HepG2 (cell line): ENCODE measurements at regions of chrX and their contacts with region 1.

Region 1: GRCh38 chrX:48021026-48021900 is 14.5 kb downstream of the SPACA5 start:
- DNase-seq: peak; percentile 71
- ATAC-seq: peak; percentile 81
- H3K4me3 ChIP-seq: peak overlapping the region; percentile 71 to 82 (median 79)
- H3K27ac ChIP-seq: peak overlapping the region; percentile 93
- H3K4me1 ChIP-seq: no peaks in the 10 kb centered on the region
- H3K27me3 ChIP-seq: no peaks in the 10 kb centered on the region; a peak in 1 of 5 replicates
- CTCF ChIP-seq: no peak
- EP300 ChIP-seq: no peak
- POLR2A ChIP-seq: 0 out of 4 replicates have a peak, but pooled peaks of 1 of the 2 experiments have one; percentile 23
- RAD21 ChIP-seq: no peak

Region 2: DNA sequence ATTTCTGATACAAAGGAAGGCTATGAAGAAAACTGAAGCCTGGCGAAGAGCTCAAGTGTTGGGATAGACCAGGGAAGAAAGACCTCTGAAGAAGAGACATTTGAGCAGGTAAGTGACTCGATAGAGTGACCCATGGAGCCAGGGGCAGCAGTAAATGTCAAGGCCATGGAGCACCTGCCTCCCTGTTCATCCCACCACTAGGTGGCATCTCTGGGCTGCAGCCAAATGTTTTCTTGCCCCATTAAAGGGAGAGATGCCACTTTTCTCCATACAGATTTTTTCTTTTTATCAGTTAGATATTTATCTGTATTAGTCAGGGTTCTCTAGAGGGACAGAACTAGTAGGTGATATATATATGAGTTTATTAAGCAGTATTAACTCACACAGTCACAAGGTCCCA is 189.5 kb before region 1 on chrX:
- CTCF ChIA-PET with region 1: interaction called, 94 read pairs
- POLR2A ChIA-PET with region 1: interaction called, 3 read pairs
- in situ Hi-C with region 1: loop called (anchors 5 kb)
- intact Hi-C with region 1: no loop called
- DNase-seq: peak; percentile 29
- ATAC-seq: peak; percentile 35; the same call in 2 of the 3 replicates
- H3K4me3 ChIP-seq: no peak overlapping the region
- H3K27ac ChIP-seq: no peak overlapping the region
- H3K4me1 ChIP-seq: peaks cover 6% of the 10 kb centered on the region; the same call in 1 of the 2 replicates
- H3K27me3 ChIP-seq: no peaks in the 10 kb centered on the region
- CTCF ChIP-seq: peak; percentile 72
- EP300 ChIP-seq: no peak
- POLR2A ChIP-seq: no peak
- RAD21 ChIP-seq: peak; percentile 61

Region 3: DNA sequence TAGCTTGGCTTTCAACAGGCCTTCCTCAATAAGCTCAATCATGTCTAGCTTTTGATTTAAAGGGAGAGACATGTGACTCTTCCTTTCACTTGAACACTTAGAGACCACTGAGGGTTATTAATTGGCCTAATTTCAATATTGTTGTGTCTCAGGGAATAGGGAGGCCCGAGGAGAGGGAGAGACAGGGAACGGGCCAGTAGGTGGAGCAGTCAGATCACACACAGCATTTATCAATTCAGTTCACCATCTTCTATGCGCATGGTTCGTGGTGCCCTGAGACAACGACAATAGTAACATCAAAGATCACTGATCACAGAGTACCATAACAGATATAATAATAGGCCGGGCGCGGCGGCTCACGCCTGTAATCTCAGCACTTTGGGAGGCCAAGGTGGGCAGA is 166.8 kb before region 1 on chrX:
- CTCF ChIA-PET with region 1: interaction called, 42 read pairs
- POLR2A ChIA-PET with region 1: no interaction called
- in situ Hi-C with region 1: no loop called
- intact Hi-C with region 1: no loop called
- DNase-seq: no peak
- ATAC-seq: no peak
- H3K4me3 ChIP-seq: no peak overlapping the region
- H3K27ac ChIP-seq: no peak overlapping the region
- H3K4me1 ChIP-seq: 0 out of 2 replicates have a peak, but pooled peaks cover 1% of the 10 kb centered on the region
- H3K27me3 ChIP-seq: no peaks in the 10 kb centered on the region
- CTCF ChIP-seq: peak; percentile 59
- EP300 ChIP-seq: no peak
- POLR2A ChIP-seq: no peak
- RAD21 ChIP-seq: peak; percentile 18; the same call in 1 of the 2 replicates

Region 4: DNA sequence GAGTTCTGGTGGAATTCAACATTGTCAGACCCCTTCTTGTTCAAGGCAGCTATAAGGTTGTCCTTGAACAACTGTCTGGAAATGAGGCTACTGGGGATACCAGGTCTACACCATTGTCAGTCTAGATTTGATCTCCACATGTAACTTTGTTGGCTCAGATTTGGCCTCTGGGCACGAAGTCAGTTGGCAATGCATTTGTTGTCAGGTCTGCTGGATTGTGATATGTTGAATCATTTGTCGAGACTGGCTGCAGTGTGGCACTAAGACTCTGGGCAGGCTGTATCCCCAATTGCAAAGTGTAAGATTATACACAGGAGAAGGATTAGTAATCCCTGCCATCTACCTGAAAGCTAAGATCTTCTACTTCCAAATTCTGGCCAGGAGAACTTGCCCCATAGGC is 158.1 kb before region 1 on chrX:
- CTCF ChIA-PET with region 1: interaction called, 3 read pairs
- POLR2A ChIA-PET with region 1: no interaction called
- in situ Hi-C with region 1: loop called (anchors 5 kb)
- intact Hi-C with region 1: no loop called
- DNase-seq: no peak
- ATAC-seq: no peak
- H3K4me3 ChIP-seq: no peak overlapping the region
- H3K27ac ChIP-seq: no peak overlapping the region
- H3K4me1 ChIP-seq: peaks cover 24% of the 10 kb centered on the region
- H3K27me3 ChIP-seq: no peaks in the 10 kb centered on the region
- CTCF ChIP-seq: no peak
- EP300 ChIP-seq: no peak
- POLR2A ChIP-seq: no peak
- RAD21 ChIP-seq: no peak

Region 5: DNA sequence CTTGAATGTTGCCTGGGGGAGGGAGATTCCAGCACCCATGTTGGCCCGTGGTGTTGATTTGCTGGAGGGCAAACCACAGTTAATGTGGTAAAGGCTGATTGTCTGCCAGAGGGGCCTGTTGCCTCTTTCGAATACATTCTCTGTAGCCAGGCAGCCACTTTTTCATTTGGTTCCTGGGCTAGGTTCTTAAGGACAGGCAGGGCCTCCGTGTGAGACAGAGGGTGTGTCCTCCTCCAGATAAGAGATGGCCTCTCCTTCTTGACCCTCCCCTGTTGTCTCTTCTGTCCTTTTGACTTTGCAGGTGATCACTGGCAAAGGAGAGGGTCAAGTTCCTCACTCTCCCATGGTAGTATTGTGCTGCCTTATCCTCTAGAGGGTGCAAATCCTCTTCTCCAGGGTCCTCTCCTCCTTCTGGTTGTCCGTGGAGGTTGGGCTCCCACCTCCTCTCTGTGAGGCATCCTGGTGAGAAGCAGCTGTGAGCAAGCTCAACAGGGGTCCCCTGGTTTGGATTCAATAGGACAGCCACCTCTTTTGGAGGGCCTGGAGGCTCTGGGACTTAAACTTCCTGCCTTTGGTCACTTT is 62.4 kb before region 1 on chrX:
- CTCF ChIA-PET with region 1: interaction called, 30 read pairs
- POLR2A ChIA-PET with region 1: interaction called, 3 read pairs
- in situ Hi-C with region 1: loop called (anchors 10 kb)
- intact Hi-C with region 1: loop called (anchors 2 kb)
- DNase-seq: peak; percentile 21
- ATAC-seq: peak; percentile 83
- H3K4me3 ChIP-seq: no peak overlapping the region
- H3K27ac ChIP-seq: no peak overlapping the region
- H3K4me1 ChIP-seq: peaks cover 9% of the 10 kb centered on the region
- H3K27me3 ChIP-seq: no peaks in the 10 kb centered on the region
- CTCF ChIP-seq: peak; percentile 58
- EP300 ChIP-seq: no peak
- POLR2A ChIP-seq: no peak
- RAD21 ChIP-seq: no peak

Region 6: GRCh38 chrX:47991263-47992092 is 29.8 kb before region 1 on chrX:
- CTCF ChIA-PET with region 1: no interaction called
- POLR2A ChIA-PET with region 1: no interaction called
- in situ Hi-C with region 1: no loop called
- intact Hi-C with region 1: no loop called
- DNase-seq: no peak
- ATAC-seq: no peak
- H3K4me3 ChIP-seq: no peak overlapping the region
- H3K27ac ChIP-seq: no peak overlapping the region
- H3K4me1 ChIP-seq: no peaks in the 10 kb centered on the region
- H3K27me3 ChIP-seq: no peaks in the 10 kb centered on the region
- CTCF ChIP-seq: no peak
- EP300 ChIP-seq: no peak
- POLR2A ChIP-seq: no peak
- RAD21 ChIP-seq: no peak

Region 7: GRCh38 chrX:48045410-48046331 is 24.4 kb after region 1 on chrX:
- CTCF ChIA-PET with region 1: no interaction called
- POLR2A ChIA-PET with region 1: no interaction called
- in situ Hi-C with region 1: no loop called
- intact Hi-C with region 1: no loop called
- DNase-seq: peak; percentile 7
- ATAC-seq: no peak
- H3K4me3 ChIP-seq: no peak overlapping the region
- H3K27ac ChIP-seq: no peak overlapping the region
- H3K4me1 ChIP-seq: no peaks in the 10 kb centered on the region
- H3K27me3 ChIP-seq: no peaks in the 10 kb centered on the region; a peak in 1 of 5 replicates
- CTCF ChIP-seq: no peak
- EP300 ChIP-seq: no peak
- POLR2A ChIP-seq: no peak
- RAD21 ChIP-seq: no peak

Region 8: GRCh38 chrX:48064281-48064680 is 43.0 kb after region 1 on chrX:
- CTCF ChIA-PET with region 1: no interaction called
- POLR2A ChIA-PET with region 1: no interaction called
- in situ Hi-C with region 1: no loop called
- intact Hi-C with region 1: no loop called
- DNase-seq: no peak
- ATAC-seq: no peak
- H3K4me3 ChIP-seq: no peak overlapping the region
- H3K27ac ChIP-seq: no peak overlapping the region
- H3K4me1 ChIP-seq: no peaks in the 10 kb centered on the region
- H3K27me3 ChIP-seq: no peaks in the 10 kb centered on the region
- CTCF ChIP-seq: no peak
- EP300 ChIP-seq: no peak
- POLR2A ChIP-seq: no peak
- RAD21 ChIP-seq: no peak